ENCODE measurements at regions of chr6 and their contacts with region 1.

Region 1: DNA sequence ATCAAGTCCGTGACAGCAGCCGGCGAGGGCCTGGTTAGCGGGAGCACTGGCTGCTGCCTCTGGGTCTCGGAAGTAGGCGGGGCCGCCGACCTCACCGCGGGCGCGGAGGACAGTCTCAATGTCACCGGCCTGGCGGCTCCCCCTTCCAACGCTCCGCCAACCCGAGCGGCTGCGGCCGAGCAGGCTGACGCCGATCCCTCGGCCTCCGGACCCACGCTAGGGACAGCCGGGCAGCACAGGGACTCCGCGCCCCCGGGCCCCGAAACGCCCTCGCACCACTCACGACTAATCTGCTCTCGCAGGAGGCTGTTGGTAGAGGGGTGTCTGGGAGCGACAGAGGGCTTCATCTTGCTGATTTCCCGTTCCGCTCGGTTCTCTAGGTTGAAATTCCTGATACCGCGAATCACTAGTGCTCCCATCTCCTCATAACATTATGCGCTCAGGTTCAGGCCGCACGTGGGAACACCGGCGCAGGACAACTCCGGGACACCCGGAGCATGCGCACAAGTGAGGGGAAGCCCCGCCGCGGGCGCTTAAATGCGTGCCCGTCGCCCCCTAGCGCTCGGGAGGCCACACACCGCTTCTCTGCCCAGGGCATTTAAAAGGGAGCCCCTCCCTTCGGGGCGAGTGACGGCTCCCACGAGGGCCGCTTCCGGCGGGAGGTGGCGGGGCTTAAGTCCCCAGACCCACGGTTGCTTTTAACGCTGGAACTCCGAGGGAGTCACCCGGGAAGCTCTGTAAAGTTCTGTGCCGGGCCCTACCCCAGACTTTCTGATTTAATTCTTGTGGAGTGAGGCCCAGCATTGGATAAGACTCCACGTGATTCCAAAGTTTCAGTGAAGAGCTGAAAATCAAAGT is at the start of gene NDUFAF4:
- DNase-seq: peak; percentile 94 to 95 (median 94)
- H3K4me3 ChIP-seq: peak within 1 kb of the TSS; percentile 92 to 96
- H3K4me3 Mint-ChIP-seq: peak within 1 kb of the TSS; percentile 86 to 99 (median 98)
- H3K27ac ChIP-seq: peak within 1 kb of the TSS; percentile 92
- H3K27ac Mint-ChIP-seq: peak within 1 kb of the TSS; percentile 73 to 99 (median 98)
- H3K4me1 ChIP-seq: peaks cover 34% of the 10 kb centered on the region
- H3K4me1 Mint-ChIP-seq: peaks cover 17 to 31% (median 23%) of the 10 kb centered on the region in 4 donors
- H3K27me3 ChIP-seq: no peaks in the 10 kb centered on the region
- H3K27me3 Mint-ChIP-seq: peaks cover 2 to 11% of the 10 kb centered on the region in 2 donors
- total RNA-seq, gene NDUFAF4: 24.3 to 27.5 TPM

Region 2: GRCh38 chr6:95431637-95432228 is 1465.9 kb before region 1 on chr6:
- CTCF ChIA-PET with region 1: no interaction called
- POLR2A ChIA-PET with region 1: no interaction called
- intact Hi-C with region 1: loop called (anchors 5 kb)
- DNase-seq: peak; percentile 18 to 39 (median 28)
- H3K4me3 ChIP-seq: no peak overlapping the region
- H3K4me3 Mint-ChIP-seq: no peak overlapping the region
- H3K27ac ChIP-seq: no peak overlapping the region
- H3K27ac Mint-ChIP-seq: no peak overlapping the region
- H3K4me1 ChIP-seq: no peaks in the 10 kb centered on the region
- H3K4me1 Mint-ChIP-seq: no peaks in the 10 kb centered on the region
- H3K27me3 ChIP-seq: no peaks in the 10 kb centered on the region
- H3K27me3 Mint-ChIP-seq: peaks cover 0 to 4% of the 10 kb centered on the region in 2 donors

Region 3: DNA sequence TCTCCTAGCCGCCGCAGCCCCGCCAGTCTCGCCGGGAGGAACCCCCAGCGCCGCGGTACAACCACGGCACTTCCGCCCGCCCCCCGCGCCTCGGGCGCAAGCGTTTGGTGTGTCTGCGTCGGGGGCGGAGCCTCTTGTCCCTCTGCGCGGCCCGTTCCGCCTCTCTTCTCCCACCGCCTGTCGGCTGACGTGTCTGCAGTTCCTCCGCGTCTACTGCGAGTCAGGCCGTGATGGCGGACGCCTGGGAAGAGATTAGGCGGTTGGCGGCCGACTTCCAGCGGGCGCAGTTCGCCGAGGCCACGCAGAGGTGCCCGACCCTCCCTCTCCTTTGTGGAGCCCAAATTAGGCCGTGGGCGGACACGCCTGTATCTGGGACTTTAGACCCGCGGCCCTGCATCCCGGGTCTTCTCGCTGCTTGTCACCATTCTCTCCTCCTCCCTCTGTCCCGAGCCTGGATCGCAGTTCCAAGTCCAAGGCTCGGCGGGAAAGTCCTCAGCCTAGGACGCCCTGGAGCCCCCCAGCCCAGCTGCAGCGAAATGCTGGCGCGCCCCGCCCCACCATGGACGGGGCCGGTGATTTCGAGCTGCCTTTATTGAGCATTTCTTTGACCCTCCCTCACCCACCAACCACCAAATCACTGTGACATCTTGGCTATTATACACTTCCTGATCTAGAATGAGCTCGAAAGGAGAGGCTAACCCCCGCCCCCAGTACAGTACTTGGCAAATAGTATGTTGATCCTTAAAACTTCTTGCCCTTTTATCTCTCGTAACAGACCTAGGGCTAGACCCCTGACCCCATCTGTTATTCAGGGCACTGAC is 375.8 kb before region 1 on chr6 and contains the start of gene UFL1:
- CTCF ChIA-PET with region 1: interaction called, 3 read pairs
- POLR2A ChIA-PET with region 1: no interaction called
- intact Hi-C with region 1: loop called (anchors 1 kb)
- DNase-seq: peak; percentile 91 to 96 (median 94)
- H3K4me3 ChIP-seq: peak within 1 kb of the TSS; percentile 77 to 79
- H3K4me3 Mint-ChIP-seq: peak within 1 kb of the TSS; percentile 96 to 100 (median 100)
- H3K27ac ChIP-seq: peak within 1 kb of the TSS; percentile 97
- H3K27ac Mint-ChIP-seq: peak within 1 kb of the TSS; percentile 99 to 100 (median 100)
- H3K4me1 ChIP-seq: peaks cover 36% of the 10 kb centered on the region
- H3K4me1 Mint-ChIP-seq: peaks cover 16 to 41% (median 23%) of the 10 kb centered on the region in 4 donors
- H3K27me3 ChIP-seq: no peaks in the 10 kb centered on the region
- H3K27me3 Mint-ChIP-seq: no peaks in the 10 kb centered on the region
- total RNA-seq, gene UFL1: 35.0 to 38.5 TPM

Region 4: DNA sequence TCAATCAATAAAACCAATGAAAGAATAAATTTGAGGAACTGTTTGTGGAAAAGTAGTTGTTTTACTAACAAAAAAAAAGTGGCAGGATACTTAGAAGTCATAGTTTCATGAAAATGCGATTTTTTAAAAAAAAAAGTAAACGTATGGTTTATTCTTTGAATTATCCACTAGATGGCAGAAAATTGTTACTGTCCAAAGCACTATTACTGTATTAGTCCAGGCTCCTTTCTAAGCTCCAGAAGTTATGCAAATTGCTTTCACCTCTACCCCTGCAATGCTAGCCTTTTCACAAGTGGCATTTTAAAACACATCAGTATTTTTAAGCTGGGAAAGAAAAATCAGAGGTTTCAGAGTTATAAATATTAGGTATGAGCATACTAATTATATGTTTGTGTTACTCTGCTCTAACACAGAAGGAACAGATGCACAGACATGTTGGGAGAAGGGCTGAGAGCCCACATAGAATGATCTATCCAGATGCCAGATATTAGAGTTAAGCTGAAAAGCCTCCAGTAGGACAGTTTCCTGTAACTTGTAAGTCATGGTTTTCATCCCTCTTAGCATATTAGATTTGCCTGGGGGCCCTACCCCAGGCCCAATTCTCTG is 270.8 kb before region 1 on chr6:
- CTCF ChIA-PET with region 1: no interaction called
- POLR2A ChIA-PET with region 1: no interaction called
- intact Hi-C with region 1: loop called (anchors 1 kb)
- DNase-seq: peak in 4 of 5 donors; percentile 7 to 24 (median 17)
- H3K4me3 ChIP-seq: no peak overlapping the region
- H3K4me3 Mint-ChIP-seq: no peak overlapping the region
- H3K27ac ChIP-seq: no peak overlapping the region
- H3K27ac Mint-ChIP-seq: no peak overlapping the region
- H3K4me1 ChIP-seq: no peaks in the 10 kb centered on the region
- H3K4me1 Mint-ChIP-seq: no peaks in the 10 kb centered on the region
- H3K27me3 ChIP-seq: no peaks in the 10 kb centered on the region
- H3K27me3 Mint-ChIP-seq: peaks cover 3 to 6% of the 10 kb centered on the region in 2 donors

Region 5: GRCh38 chr6:96923871-96924493 is 26.4 kb after region 1 on chr6:
- CTCF ChIA-PET with region 1: interaction called, 25 read pairs
- POLR2A ChIA-PET with region 1: interaction called, 33 read pairs
- intact Hi-C with region 1: loop called (anchors 1 kb)
- DNase-seq: peak in 1 of 5 donors; percentile 66
- H3K4me3 ChIP-seq: peak overlapping the region; percentile 45 to 75
- H3K4me3 Mint-ChIP-seq: peak overlapping the region; percentile 89 to 98 (median 96)
- H3K27ac ChIP-seq: peak overlapping the region; percentile 91
- H3K27ac Mint-ChIP-seq: peak overlapping the region; percentile 97 to 100 (median 98)
- H3K4me1 ChIP-seq: peaks cover 30% of the 10 kb centered on the region
- H3K4me1 Mint-ChIP-seq: peaks cover 21 to 49% (median 34%) of the 10 kb centered on the region in 4 donors
- H3K27me3 ChIP-seq: no peaks in the 10 kb centered on the region
- H3K27me3 Mint-ChIP-seq: peaks cover 0 to 2% of the 10 kb centered on the region in 2 donors

Region 6: GRCh38 chr6:97177905-97178304 is 280.3 kb after region 1 on chr6:
- CTCF ChIA-PET with region 1: no interaction called
- POLR2A ChIA-PET with region 1: no interaction called
- intact Hi-C with region 1: no loop called
- DNase-seq: no peak
- H3K4me3 ChIP-seq: no peak overlapping the region
- H3K4me3 Mint-ChIP-seq: no peak overlapping the region
- H3K27ac ChIP-seq: no peak overlapping the region
- H3K27ac Mint-ChIP-seq: no peak overlapping the region
- H3K4me1 ChIP-seq: no peaks in the 10 kb centered on the region
- H3K4me1 Mint-ChIP-seq: no peaks in the 10 kb centered on the region
- H3K27me3 ChIP-seq: no peaks in the 10 kb centered on the region
- H3K27me3 Mint-ChIP-seq: no peaks in the 10 kb centered on the region

Region 7: GRCh38 chr6:97282726-97283617 is 385.4 kb after region 1 on chr6 and contains the start of gene MMS22L:
- CTCF ChIA-PET with region 1: no interaction called
- POLR2A ChIA-PET with region 1: no interaction called
- intact Hi-C with region 1: loop called (anchors 2 kb)
- DNase-seq: peak; percentile 92 to 93 (median 93)
- H3K4me3 ChIP-seq: peak within 1 kb of the TSS; percentile 73 to 92
- H3K4me3 Mint-ChIP-seq: peak within 1 kb of the TSS; percentile 92 to 98 (median 96)
- H3K27ac ChIP-seq: peak within 1 kb of the TSS; percentile 64
- H3K27ac Mint-ChIP-seq: peak within 1 kb of the TSS; percentile 86 to 96 (median 92)
- H3K4me1 ChIP-seq: peaks cover 22% of the 10 kb centered on the region
- H3K4me1 Mint-ChIP-seq: peaks cover 16 to 37% (median 26%) of the 10 kb centered on the region in 4 donors
- H3K27me3 ChIP-seq: no peaks in the 10 kb centered on the region
- H3K27me3 Mint-ChIP-seq: no peaks in the 10 kb centered on the region
- total RNA-seq, gene MMS22L: 12.4 to 13.2 TPM